ENCODE measurements at regions of chr1 and their contacts with region 1.

Region 1: DNA sequence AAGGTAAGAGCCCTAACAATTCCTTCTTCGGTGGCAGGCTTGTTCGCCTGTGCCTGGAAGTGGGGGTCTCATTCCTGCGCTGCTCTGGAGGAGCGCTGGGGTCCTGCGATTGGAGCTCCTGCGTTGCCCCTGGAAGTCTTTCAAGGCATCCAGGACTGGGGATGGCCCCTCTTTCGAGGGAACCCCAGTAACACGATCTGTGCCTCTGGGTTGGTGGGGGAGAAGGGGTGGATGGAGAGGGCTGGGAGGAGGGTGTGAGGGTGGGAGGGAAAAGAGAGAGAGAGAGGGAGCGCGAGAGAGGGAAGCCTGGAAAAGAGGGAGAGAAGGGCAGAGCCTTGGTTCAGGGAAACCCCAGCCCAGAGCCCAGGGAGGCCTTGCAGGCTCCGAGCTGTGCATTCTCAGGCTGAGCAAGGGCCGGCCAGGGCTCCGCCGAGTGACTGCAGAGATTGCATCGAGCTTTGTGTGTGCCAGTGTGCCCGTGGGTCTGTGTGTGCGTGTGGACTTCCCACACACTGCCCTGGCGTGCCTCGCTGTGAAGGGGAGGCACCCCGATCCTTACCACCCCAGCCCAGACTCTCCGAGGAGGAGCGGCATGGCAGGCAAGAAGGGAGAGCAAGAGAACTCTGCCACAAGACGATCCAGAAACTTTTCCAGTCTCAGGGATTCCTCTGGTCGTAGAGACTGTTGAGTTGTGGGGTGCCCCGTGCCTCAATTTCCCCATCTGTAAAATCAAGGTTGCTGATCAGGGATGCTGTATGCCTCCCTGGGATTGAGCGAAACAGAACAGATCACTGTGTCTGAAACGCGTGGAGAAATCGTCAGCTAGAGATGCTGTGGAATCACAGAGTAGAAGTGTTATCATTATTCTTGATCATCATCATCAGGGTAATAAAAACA is 619 bp downstream of the BCL9 start:
- DNase-seq: peak; percentile 68
- H3K4me3 ChIP-seq: peak overlapping the region; percentile 69
- H3K27ac ChIP-seq: peak overlapping the region; percentile 96
- H3K4me1 ChIP-seq: peaks cover 25% of the 10 kb centered on the region
- H3K27me3 ChIP-seq: no peaks in the 10 kb centered on the region
- CTCF ChIP-seq: no peak

Region 2: GRCh38 chr1:147599362-147600118 is 57.6 kb after region 1 on chr1:
- CTCF ChIA-PET with region 1: no interaction called
- POLR2A ChIA-PET with region 1: no interaction called
- intact Hi-C with region 1: loop called (anchors 1 kb)
- DNase-seq: peak; percentile 97
- H3K4me3 ChIP-seq: peak overlapping the region; percentile 56
- H3K27ac ChIP-seq: peak overlapping the region; percentile 70
- H3K4me1 ChIP-seq: peaks cover 5% of the 10 kb centered on the region
- H3K27me3 ChIP-seq: no peaks in the 10 kb centered on the region
- CTCF ChIP-seq: no peak

Region 3: GRCh38 chr1:147613506-147613905 is 71.6 kb after region 1 on chr1:
- CTCF ChIA-PET with region 1: no interaction called
- POLR2A ChIA-PET with region 1: interaction called, 16 read pairs
- intact Hi-C with region 1: no loop called
- DNase-seq: peak; percentile 62
- H3K4me3 ChIP-seq: no peak overlapping the region
- H3K27ac ChIP-seq: no peak overlapping the region
- H3K4me1 ChIP-seq: peaks cover 6% of the 10 kb centered on the region
- H3K27me3 ChIP-seq: no peaks in the 10 kb centered on the region
- CTCF ChIP-seq: no peak

Region 4: GRCh38 chr1:147868953-147869352 is 327.0 kb after region 1 on chr1:
- CTCF ChIA-PET with region 1: no interaction called
- POLR2A ChIA-PET with region 1: no interaction called
- intact Hi-C with region 1: no loop called
- DNase-seq: no peak
- H3K4me3 ChIP-seq: no peak overlapping the region
- H3K27ac ChIP-seq: no peak overlapping the region
- H3K4me1 ChIP-seq: no peaks in the 10 kb centered on the region
- H3K27me3 ChIP-seq: peaks cover 6% of the 10 kb centered on the region
- CTCF ChIP-seq: no peak

Region 5: GRCh38 chr1:148263128-148263905 is 721.4 kb after region 1 on chr1:
- CTCF ChIA-PET with region 1: no interaction called
- POLR2A ChIA-PET with region 1: no interaction called
- intact Hi-C with region 1: no loop called
- DNase-seq: peak; percentile 79
- H3K4me3 ChIP-seq: peak overlapping the region; percentile 43
- H3K27ac ChIP-seq: peak overlapping the region; percentile 72
- H3K4me1 ChIP-seq: no peaks in the 10 kb centered on the region
- H3K27me3 ChIP-seq: no peaks in the 10 kb centered on the region
- CTCF ChIP-seq: no peak